ENCODE measurements at regions of chrX and their contacts with region 1.

Region 1: GRCh38 chrX:114272096-114272686 is 311.7 kb upstream of the HTR2C start:
- DNase-seq: no peak
- ATAC-seq: no peak
- H3K4me3 ChIP-seq: no peak overlapping the region
- H3K27ac ChIP-seq: no peak overlapping the region
- H3K4me1 ChIP-seq: peaks cover 0 to 4% of the 10 kb centered on the region in 2 experiments; a peak in 1 of 5 replicates
- H3K27me3 ChIP-seq: no peaks in the 10 kb centered on the region
- CTCF ChIP-seq: no peak
- EP300 ChIP-seq: no peak
- POLR2A ChIP-seq: no peak
- RAD21 ChIP-seq: no peak

Region 2: DNA sequence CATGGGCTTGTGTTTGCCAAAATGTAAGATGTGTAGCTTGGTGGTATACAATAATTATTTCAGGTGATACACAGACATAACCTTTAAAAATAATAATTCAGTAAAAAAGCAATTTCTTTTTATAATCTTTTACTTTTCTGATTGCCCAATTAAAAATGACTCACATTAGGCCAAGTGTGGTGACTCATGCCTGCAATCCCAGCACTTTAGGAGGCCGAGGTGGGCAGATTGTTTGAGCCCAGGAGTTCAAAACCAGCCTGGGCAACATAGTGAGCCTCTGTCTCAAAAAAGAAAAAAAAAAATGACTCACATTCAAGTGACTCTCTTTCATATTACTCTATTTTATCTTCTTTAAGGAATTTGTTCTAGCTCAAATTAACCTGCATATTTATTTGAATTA is 137.7 kb before region 1 on chrX:
- CTCF ChIA-PET with region 1: no interaction called
- POLR2A ChIA-PET with region 1: no interaction called
- in situ Hi-C with region 1: no loop called
- intact Hi-C with region 1: no loop called
- DNase-seq: no peak
- ATAC-seq: no peak
- H3K4me3 ChIP-seq: no peak overlapping the region
- H3K27ac ChIP-seq: no peak overlapping the region
- H3K4me1 ChIP-seq: no peaks in the 10 kb centered on the region
- H3K27me3 ChIP-seq: no peaks in the 10 kb centered on the region
- CTCF ChIP-seq: no peak
- EP300 ChIP-seq: no peak
- POLR2A ChIP-seq: no peak
- RAD21 ChIP-seq: no peak

Region 3: DNA sequence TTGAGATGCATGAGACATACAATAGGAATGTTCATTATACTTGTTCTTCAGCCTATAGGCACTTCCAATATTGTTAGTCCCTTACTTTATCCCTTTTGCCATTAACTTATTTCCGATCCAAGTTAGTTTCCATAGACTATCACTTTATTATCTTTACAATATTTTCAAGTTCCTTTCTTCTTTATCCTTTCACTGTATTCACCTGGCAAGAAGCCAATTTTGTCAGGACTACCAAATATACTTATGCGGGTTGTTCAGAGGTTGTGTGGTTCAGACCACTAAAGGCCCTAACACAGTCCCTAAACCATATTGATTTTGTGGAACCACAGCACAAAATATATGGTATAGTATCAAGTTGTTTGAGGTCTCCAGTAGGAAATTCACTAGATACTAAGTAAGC is 66.7 kb after region 1 on chrX:
- CTCF ChIA-PET with region 1: no interaction called
- POLR2A ChIA-PET with region 1: no interaction called
- in situ Hi-C with region 1: loop called (anchors 5 kb)
- intact Hi-C with region 1: no loop called
- DNase-seq: no peak
- ATAC-seq: no peak
- H3K4me3 ChIP-seq: no peak overlapping the region
- H3K27ac ChIP-seq: no peak overlapping the region
- H3K4me1 ChIP-seq: no peaks in the 10 kb centered on the region
- H3K27me3 ChIP-seq: no peaks in the 10 kb centered on the region
- CTCF ChIP-seq: no peak
- EP300 ChIP-seq: no peak
- POLR2A ChIP-seq: no peak
- RAD21 ChIP-seq: no peak